ENCODE measurements at regions of chr1 and their contacts with region 1.

Region 1: DNA sequence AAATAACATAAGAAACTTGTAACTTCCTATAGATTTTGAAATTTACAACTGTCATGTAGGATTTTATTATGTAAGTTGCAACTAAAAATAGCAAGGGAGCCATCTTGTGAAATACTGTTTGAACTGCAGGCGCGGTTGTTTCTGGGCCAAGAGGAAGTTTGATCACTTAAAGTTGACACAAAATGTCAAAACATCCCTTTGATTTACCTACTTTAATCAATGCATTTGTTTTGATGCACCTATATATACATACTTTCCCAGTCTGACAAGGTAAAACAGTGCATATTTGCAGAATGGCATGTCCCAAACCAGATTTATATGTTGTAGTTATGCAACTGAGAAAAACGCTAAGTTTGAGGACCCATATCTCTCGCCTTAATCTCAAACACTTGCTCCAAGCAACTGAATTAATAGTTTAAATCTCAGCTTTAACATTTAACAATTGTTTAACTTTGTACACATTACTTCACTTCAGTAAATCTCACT is 63.8 kb downstream of the KCNK2 start:
- DNase-seq: peak; percentile 55
- H3K4me3 ChIP-seq: no peak overlapping the region
- H3K27ac ChIP-seq: no peak overlapping the region
- H3K4me1 ChIP-seq: no peaks in the 10 kb centered on the region
- H3K27me3 ChIP-seq: no peaks in the 10 kb centered on the region
- CTCF ChIP-seq: peak; percentile 38 to 49
- POLR2A ChIP-seq: no peak

Region 2: GRCh38 chr1:214637722-214638458 is 508.5 kb before region 1 on chr1:
- CTCF ChIA-PET with region 1: interaction called, 12 read pairs
- POLR2A ChIA-PET with region 1: no interaction called
- dilution Hi-C with region 1: no loop called
- intact Hi-C with region 1: no loop called
- DNase-seq: peak; percentile 64
- H3K4me3 ChIP-seq: no peak overlapping the region
- H3K27ac ChIP-seq: no peak overlapping the region
- H3K4me1 ChIP-seq: peaks cover 7% of the 10 kb centered on the region
- H3K27me3 ChIP-seq: no peaks in the 10 kb centered on the region
- CTCF ChIP-seq: peak; percentile 52 to 68
- POLR2A ChIP-seq: no peak

Region 3: GRCh38 chr1:214660862-214661261 is 485.5 kb before region 1 on chr1:
- CTCF ChIA-PET with region 1: interaction called, 43 read pairs
- POLR2A ChIA-PET with region 1: no interaction called
- dilution Hi-C with region 1: no loop called
- intact Hi-C with region 1: loop called (anchors 1 kb)
- DNase-seq: peak; percentile 33
- H3K4me3 ChIP-seq: no peak overlapping the region
- H3K27ac ChIP-seq: no peak overlapping the region
- H3K4me1 ChIP-seq: no peaks in the 10 kb centered on the region
- H3K27me3 ChIP-seq: no peaks in the 10 kb centered on the region
- CTCF ChIP-seq: peak; percentile 24 to 42
- POLR2A ChIP-seq: no peak

Region 4: DNA sequence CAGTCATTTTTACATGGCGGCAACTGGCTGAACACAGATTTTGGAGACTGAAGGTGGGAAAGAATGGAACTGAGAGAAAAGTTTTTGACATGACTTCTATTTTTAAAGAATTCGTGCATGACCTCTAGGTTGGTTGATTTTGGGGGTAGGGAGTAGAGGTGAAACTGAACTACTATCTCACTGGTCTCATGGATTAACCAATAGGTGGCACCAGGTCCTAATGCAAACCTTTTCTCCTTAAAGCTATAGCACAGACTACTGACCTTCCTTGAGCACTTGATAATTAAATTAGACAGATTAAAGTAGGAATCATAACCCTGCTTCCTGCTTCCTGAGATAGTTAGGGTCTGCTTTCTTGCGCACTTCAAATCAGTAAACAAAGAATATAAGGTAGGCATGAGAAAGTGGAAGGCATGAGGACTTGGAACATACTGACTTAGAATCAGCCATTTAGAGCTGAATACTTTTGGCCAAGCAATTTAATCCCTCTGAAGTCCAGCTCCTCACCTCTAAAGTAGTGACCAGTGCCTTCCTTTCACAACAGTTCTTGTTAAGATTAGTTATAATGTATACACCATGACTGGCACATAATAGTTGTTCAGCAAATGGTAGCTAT is 337.4 kb before region 1 on chr1:
- CTCF ChIA-PET with region 1: interaction called, 46 read pairs
- POLR2A ChIA-PET with region 1: no interaction called
- dilution Hi-C with region 1: no loop called
- intact Hi-C with region 1: loop called (anchors 1 kb)
- DNase-seq: peak; percentile 25
- H3K4me3 ChIP-seq: no peak overlapping the region
- H3K27ac ChIP-seq: no peak overlapping the region
- H3K4me1 ChIP-seq: no peaks in the 10 kb centered on the region
- H3K27me3 ChIP-seq: no peaks in the 10 kb centered on the region
- CTCF ChIP-seq: peak; percentile 8 to 14
- POLR2A ChIP-seq: no peak

Region 5: GRCh38 chr1:215056584-215056983 is 89.8 kb before region 1 on chr1:
- CTCF ChIA-PET with region 1: no interaction called
- POLR2A ChIA-PET with region 1: no interaction called
- dilution Hi-C with region 1: no loop called
- intact Hi-C with region 1: no loop called
- DNase-seq: no peak
- H3K4me3 ChIP-seq: no peak overlapping the region
- H3K27ac ChIP-seq: no peak overlapping the region
- H3K4me1 ChIP-seq: no peaks in the 10 kb centered on the region
- H3K27me3 ChIP-seq: no peaks in the 10 kb centered on the region
- CTCF ChIP-seq: no peak
- POLR2A ChIP-seq: no peak

Measured in endothelial cell of umbilical vein (primary cell).